GM10248 (cell line): ENCODE measurements at regions of chr2 and their contacts with region 1.

Region 1: GRCh38 chr2:57562495-57562894 is 484.1 kb upstream of the VRK2 start:
- DNase-seq: no peak
- CTCF ChIP-seq: no peak

Region 2: DNA sequence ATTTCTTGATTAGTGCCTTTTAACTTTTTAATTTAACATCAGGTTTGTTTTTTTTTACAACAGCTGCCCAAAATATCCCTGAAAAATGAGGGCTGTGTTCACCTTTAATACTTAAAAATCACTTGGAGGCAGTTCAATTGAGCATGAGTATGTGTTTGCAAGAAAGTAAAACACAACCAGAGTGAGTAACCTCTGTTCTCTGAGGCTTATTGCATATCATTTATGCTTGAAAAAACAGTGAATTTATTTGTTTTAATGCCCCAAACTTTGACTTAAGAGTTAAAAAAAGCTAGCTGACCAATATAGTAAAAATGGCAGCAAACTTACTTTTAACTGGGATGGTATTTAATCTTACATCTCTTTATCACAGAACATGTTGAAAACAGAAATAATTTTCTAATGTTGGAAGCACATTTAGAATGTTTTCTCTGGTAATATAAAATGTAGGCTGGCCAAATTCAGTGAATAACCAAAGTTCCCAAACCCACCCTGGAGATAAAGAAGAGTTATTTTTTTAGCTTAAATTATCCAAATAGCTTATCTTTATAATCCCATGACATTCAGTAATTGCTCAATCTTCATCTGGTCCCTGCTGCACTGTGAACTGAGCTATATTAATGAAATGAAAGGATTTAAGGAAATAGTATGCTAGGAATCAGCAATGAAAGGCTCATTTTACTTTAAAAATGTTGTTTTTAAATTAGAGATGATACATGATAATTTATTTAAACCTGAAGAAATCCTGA is 1614.1 kb before region 1 on chr2:
- CTCF ChIA-PET with region 1: no interaction called
- POLR2A ChIA-PET with region 1: interaction called, 12 read pairs
- DNase-seq: no peak
- CTCF ChIP-seq: no peak

Region 3: DNA sequence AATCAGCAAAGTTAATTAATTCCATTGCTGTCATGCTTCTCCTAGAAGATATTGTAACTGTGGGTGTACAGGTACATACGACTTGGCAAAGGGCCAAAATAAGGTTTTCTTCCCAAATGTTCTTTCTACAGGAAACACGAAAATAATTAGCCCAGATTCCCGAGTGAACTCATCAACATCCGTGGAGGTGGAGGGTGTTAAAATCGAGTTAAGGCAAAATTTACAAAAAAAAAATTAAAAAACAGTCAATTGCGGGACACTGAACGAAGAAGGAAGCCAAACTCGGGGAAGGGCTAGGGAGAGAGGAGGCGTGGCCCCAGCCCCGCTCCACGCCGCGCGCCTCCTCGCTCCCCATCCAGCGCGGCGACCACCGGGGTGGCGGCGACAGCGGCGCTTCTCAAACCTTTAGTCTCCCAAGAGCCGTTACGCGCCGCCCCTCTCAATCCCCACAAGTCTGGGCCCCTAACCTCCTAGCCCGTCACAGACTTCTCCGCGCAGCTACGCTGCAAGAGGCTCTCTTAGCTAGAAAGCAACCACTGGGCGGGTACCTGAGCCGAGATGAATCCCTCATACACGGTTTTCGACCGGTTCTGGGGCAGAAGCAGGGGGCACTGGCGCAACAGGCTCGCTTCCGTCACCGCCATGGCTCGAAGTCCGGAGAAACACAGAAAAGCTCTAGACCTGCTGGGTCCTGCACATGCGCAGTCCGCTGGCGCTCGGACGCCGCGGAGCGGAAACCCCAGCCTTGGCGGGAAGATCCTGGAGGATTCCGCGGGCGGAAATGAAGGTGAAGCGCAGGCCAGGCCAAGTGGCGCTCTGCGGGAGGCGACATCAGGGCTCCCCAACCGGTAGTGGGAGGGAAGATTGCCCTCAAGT is 678.4 kb after region 1 on chr2 and contains the start of gene FANCL:
- CTCF ChIA-PET with region 1: no interaction called
- POLR2A ChIA-PET with region 1: no interaction called
- DNase-seq: peak; percentile 90
- CTCF ChIP-seq: no peak